ENCODE measurements at regions of chr7 and their contacts with region 1.

Region 1: DNA sequence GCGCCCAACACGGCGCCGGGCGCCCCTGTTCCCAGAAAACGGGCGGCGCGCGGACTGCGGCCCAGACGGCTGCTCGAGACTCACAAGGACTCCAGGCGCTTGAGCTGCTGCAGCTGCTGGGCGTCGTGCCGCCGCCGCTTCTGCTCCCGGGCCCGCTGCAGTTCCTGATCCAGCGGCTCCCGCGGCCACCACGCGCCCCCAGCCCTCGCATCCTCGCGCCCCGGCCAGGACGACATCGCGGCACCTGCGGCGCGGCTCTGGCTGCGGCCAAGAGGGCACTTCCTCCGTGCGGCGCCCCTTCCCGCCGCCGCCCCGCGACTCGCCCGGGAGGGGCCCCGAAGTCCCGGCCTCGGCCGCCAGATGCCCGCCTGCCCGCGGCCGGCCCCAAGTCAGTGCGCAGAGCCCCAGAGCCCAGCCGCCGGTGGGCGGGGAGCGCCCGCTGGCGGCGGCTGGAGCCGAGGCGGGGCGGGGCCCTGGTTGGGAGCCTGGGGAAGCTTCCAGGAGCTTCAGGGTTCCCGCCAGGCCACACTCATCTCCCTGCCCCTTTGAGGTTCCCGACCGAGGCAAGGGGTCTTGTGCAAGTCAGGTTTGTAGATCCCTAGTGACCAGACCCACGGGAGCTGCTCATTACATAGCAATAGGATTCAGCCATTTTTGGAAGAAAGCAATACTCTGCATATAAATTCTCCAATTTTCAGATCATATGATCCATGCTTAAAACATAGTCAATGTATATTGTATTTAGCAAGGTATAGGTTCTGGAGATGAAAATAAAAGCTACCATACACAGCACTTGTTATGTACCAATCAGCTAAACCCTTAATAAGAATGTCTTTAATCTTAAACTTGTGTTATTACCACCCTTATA is 14.2 kb upstream of the FKBP9 start:
- DNase-seq: peak; percentile 67 to 94
- H3K4me3 ChIP-seq: peak overlapping the region; percentile 71
- CTCF ChIP-seq: no peak
- POLR2A ChIP-seq: no peak

Region 2: GRCh38 chr7:32891800-32892520 is 51.1 kb before region 1 on chr7:
- intact Hi-C with region 1: loop called (anchors 5 kb)
- DNase-seq: peak; percentile 97 to 99
- H3K4me3 ChIP-seq: peak overlapping the region; percentile 89
- CTCF ChIP-seq: no peak
- POLR2A ChIP-seq: no peak

Region 3: GRCh38 chr7:33050535-33051318 is 107.7 kb after region 1 on chr7:
- intact Hi-C with region 1: loop called (anchors 10 kb)
- DNase-seq: no peak
- H3K4me3 ChIP-seq: no peak overlapping the region
- CTCF ChIP-seq: no peak
- POLR2A ChIP-seq: no peak